ENCODE measurements at regions of chr22 and their contacts with region 1.

Region 1: GRCh38 chr22:23786752-23787599 is at the start of gene SMARCB1:
- DNase-seq: peak; percentile 80 to 90 (median 87)
- ATAC-seq: peak; percentile 94
- H3K4me3 ChIP-seq: peak within 1 kb of the TSS; percentile 85
- H3K4me3 Mint-ChIP-seq: peak within 1 kb of the TSS; percentile 81 to 94 (median 91)
- H3K27ac ChIP-seq: peak within 1 kb of the TSS; percentile 99
- H3K27ac Mint-ChIP-seq: peak within 1 kb of the TSS; percentile 89 to 98 (median 96)
- H3K4me1 ChIP-seq: peaks cover 11 to 17% of the 10 kb centered on the region in 2 donors
- H3K4me1 Mint-ChIP-seq: peaks cover 13 to 54% (median 41%) of the 10 kb centered on the region in 7 donors
- H3K27me3 ChIP-seq: no peaks in the 10 kb centered on the region
- H3K27me3 Mint-ChIP-seq: no peaks in the 10 kb centered on the region
- total RNA-seq, gene SMARCB1: 47.1 to 81.1 (median 54.2) TPM

Region 2: DNA sequence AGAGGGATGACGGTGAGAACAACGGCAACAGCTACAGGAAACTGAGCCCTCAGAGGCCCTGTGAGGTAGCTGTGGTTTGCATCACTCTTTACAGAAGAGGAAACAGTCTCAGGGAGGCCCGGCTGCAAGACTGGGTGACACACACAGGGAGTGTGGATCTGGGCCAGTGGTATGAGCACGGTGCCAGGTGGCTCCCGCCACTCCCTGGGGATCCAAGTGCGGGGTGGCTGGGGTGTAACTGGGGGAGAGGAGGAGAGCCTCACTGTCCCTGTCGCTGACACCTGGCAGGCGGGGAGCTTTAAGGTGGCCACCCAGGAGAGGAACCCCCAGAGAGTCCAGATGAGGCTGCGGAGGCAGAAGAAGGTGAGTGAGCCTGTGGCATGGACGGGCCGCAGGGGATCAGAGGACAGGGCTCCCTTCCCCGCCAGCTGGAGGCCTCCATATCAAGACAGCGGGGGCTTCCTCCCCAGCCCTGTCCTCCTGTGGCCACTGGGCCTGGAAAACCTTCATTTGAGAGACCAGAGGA is 90.6 kb before region 1 on chr22:
- CTCF ChIA-PET with region 1: no interaction called
- POLR2A ChIA-PET with region 1: interaction called, 3 read pairs
- intact Hi-C with region 1: loop called in 1 of 2 experiments (anchors 1 kb)
- DNase-seq: peak; percentile 60 to 91 (median 86)
- ATAC-seq: peak; percentile 99
- H3K4me3 ChIP-seq: peak overlapping the region; percentile 71
- H3K4me3 Mint-ChIP-seq: peak overlapping the region; percentile 94 to 100 (median 98)
- H3K27ac ChIP-seq: peak overlapping the region; percentile 99
- H3K27ac Mint-ChIP-seq: peak overlapping the region; percentile 99 to 100 (median 100)
- H3K4me1 ChIP-seq: peaks cover 28 to 38% of the 10 kb centered on the region in 2 donors
- H3K4me1 Mint-ChIP-seq: peaks cover 37 to 64% (median 51%) of the 10 kb centered on the region in 7 donors
- H3K27me3 ChIP-seq: no peaks in the 10 kb centered on the region
- H3K27me3 Mint-ChIP-seq: no peaks in the 10 kb centered on the region

Region 3: DNA sequence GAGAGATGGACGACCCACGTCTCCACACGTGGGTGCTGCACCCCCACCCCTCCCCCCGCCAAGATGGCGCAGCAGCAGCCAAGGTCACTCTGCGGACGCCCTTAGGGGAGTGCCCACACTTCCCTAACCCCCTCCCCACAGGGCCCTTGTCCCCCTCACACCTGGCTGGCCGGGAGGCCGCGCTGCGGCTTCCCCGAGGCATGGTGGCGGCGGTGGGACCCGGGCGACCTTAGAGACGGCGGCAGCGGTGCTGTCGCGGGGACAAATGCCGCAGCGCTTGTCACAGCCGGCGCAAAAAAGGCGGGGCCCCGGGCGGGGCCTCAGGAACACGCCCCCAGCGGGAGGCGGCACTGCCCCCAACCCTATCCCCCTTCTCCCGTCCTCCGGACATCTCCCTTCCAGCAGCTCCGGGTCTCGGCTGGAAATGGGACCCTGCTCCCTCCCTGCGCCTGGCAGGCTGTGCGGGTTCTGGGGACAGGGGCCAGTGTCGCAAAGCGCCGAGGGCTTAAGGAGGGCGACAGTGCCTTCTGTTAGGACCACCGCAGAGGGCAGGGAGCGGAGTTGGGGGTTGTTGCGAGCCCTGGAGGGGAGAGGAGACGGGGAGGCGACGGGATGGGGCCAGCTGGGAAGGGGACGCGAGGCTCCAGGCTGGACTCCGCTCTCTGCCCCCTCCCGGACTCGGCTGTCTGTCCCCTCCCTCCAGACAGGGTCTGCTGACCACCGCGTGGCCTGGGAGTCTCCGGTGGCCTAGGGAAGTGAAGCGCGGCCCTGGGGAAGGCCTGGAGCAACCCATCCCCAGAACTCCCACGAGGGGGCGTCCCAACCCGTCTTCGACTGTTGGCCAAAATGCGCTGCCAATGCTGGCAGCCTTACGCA is 19.1 kb before region 1 on chr22 and contains the start of gene CHCHD10:
- CTCF ChIA-PET with region 1: interaction called, 10 read pairs
- POLR2A ChIA-PET with region 1: interaction called, 62 read pairs
- intact Hi-C with region 1: loop called (anchors 1 kb)
- DNase-seq: peak; percentile 63 to 84 (median 75)
- ATAC-seq: peak; percentile 80
- H3K4me3 ChIP-seq: peak within 1 kb of the TSS; percentile 92
- H3K4me3 Mint-ChIP-seq: peak within 1 kb of the TSS; percentile 63 to 88 (median 83)
- H3K27ac ChIP-seq: peak within 1 kb of the TSS; percentile 85
- H3K27ac Mint-ChIP-seq: peak within 1 kb of the TSS in 8 of 9 donors; percentile 42 to 82 (median 64)
- H3K4me1 ChIP-seq: peaks cover 27 to 37% of the 10 kb centered on the region in 2 donors
- H3K4me1 Mint-ChIP-seq: peaks cover 3 to 52% (median 38%) of the 10 kb centered on the region in 7 donors
- H3K27me3 ChIP-seq: no peaks in the 10 kb centered on the region
- H3K27me3 Mint-ChIP-seq: peaks cover 0 to 4% (median 0%) of the 10 kb centered on the region in 5 donors
- total RNA-seq, gene CHCHD10: 38.2 to 56.1 (median 46.4) TPM

Region 4: GRCh38 chr22:23857606-23858483 is 70.9 kb after region 1 on chr22 and contains the start of gene SLC2A11:
- CTCF ChIA-PET with region 1: no interaction called
- POLR2A ChIA-PET with region 1: interaction called, 4 read pairs
- intact Hi-C with region 1: loop called in 1 of 2 experiments (anchors 5 kb)
- DNase-seq: peak; percentile 84 to 91 (median 88)
- ATAC-seq: peak; percentile 97
- H3K4me3 ChIP-seq: peak within 1 kb of the TSS; percentile 99
- H3K4me3 Mint-ChIP-seq: peak within 1 kb of the TSS; percentile 87 to 99 (median 95)
- H3K27ac ChIP-seq: peak within 1 kb of the TSS; percentile 66
- H3K27ac Mint-ChIP-seq: peak within 1 kb of the TSS; percentile 86 to 97 (median 89)
- H3K4me1 ChIP-seq: peaks cover 5 to 7% of the 10 kb centered on the region in 2 donors
- H3K4me1 Mint-ChIP-seq: peaks cover 10 to 29% (median 22%) of the 10 kb centered on the region in 7 donors
- H3K27me3 ChIP-seq: no peaks in the 10 kb centered on the region
- H3K27me3 Mint-ChIP-seq: peaks cover 0 to 11% (median 0%) of the 10 kb centered on the region in 5 donors
- total RNA-seq, gene SLC2A11: 10.5 to 29.7 (median 14.7) TPM

Region 5: GRCh38 chr22:23913661-23914353 is 126.8 kb after region 1 on chr22:
- CTCF ChIA-PET with region 1: no interaction called
- POLR2A ChIA-PET with region 1: interaction called, 5 read pairs
- intact Hi-C with region 1: loop called (anchors 1 kb)
- DNase-seq: peak; percentile 94 to 100 (median 97)
- ATAC-seq: peak; percentile 100
- H3K4me3 ChIP-seq: peak overlapping the region; percentile 83
- H3K4me3 Mint-ChIP-seq: peak overlapping the region; percentile 84 to 97 (median 93)
- H3K27ac ChIP-seq: peak overlapping the region; percentile 78
- H3K27ac Mint-ChIP-seq: peak overlapping the region; percentile 89 to 99 (median 98)
- H3K4me1 ChIP-seq: peaks cover 0 to 7% of the 10 kb centered on the region in 2 donors
- H3K4me1 Mint-ChIP-seq: peaks cover 7 to 34% (median 16%) of the 10 kb centered on the region in 7 donors
- H3K27me3 ChIP-seq: no peaks in the 10 kb centered on the region
- H3K27me3 Mint-ChIP-seq: peaks cover 0 to under 1% (median 0%) of the 10 kb centered on the region in 5 donors

Region 6: DNA sequence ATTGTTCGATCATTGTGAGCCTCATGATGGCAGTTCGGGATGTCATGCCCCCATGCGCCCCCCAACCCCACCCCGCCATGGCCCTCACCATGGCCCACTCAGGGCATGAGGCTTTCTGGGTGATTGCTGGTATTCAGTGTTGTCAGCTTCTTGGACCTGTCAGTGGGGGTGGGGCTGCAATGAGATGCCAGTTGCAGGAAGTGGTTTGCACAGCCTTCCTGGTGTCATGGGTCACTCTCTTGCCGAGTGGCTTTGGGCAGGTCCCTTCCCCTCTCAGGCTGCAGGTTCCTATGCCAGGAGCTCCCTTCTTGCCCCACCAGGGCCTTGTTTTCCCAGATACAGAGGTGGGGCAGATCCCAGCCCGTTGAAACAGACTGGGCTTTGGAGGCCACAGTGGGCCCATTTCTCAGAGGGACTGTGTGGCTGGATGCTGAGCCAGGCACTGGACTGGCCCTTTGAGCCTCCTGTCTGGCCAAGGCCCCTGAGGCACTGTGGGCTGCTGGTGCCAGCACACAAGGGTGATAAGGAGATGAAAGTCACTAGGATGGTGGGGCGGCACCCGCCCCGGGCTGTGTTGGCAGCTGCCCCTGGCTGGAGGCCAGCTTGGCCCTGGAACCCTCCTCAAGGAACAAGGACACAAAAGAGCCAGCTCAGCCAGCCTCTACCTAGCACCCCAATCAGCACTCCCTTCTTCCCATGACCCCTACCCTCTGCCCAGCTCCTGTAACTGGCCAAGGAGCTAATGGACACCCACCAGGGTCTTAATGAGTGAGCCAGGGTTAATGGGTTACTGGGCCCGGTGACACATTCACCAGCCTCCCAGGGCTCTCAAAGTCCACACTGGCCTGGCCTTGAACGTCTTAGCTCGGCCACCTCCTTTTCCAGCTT is 814.5 kb after region 1 on chr22:
- CTCF ChIA-PET with region 1: no interaction called
- POLR2A ChIA-PET with region 1: no interaction called
- intact Hi-C with region 1: no loop called
- DNase-seq: no peak
- ATAC-seq: peak; percentile 60
- H3K4me3 ChIP-seq: no peak overlapping the region
- H3K4me3 Mint-ChIP-seq: peak overlapping the region in 2 of 10 donors; percentile 28 to 58
- H3K27ac ChIP-seq: no peak overlapping the region
- H3K27ac Mint-ChIP-seq: peak overlapping the region in 2 of 9 donors; percentile 38 to 67
- H3K4me1 ChIP-seq: peaks cover 0 to 8% of the 10 kb centered on the region in 2 donors
- H3K4me1 Mint-ChIP-seq: peaks cover 14 to 40% (median 19%) of the 10 kb centered on the region in 7 donors
- H3K27me3 ChIP-seq: no peaks in the 10 kb centered on the region
- H3K27me3 Mint-ChIP-seq: no peaks in the 10 kb centered on the region